ENCODE measurements at regions of chr1 and their contacts with region 1.

Region 1: DNA sequence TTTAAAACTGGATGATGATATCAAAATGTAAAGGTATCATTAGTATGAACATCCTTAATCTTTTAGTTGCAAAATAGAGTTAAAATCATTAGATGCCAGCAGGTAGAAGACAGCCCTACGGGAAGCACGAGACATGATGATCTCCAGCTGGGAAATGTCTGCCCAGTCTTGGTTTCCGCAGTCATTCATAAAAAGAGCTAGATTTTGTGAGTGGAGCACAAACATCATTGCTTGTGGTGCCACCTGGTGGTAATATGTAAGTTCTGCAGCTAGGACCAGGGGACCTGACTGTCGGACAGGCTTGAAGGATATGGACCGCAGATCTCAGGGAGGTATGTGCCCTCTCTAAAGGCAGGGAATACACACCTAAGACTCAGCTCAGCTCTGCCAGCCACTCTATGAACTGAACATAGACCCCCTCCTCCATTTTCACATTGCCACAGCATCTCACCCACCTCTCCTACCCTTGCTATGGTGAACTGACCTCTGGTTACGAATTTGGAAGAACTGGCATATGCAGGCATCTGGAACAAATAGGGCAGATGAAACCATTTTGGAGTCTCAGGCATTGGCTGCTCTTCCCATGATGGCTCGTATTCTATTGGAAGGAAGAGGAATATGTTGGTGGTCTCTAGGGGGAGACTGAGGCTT is 9.2 kb downstream of the FCMR start:
- DNase-seq: peak; percentile 82
- H3K4me3 Mint-ChIP-seq: no peak overlapping the region
- H3K27ac Mint-ChIP-seq: no peak overlapping the region
- H3K4me1 Mint-ChIP-seq: peaks cover 25% of the 10 kb centered on the region
- H3K27me3 Mint-ChIP-seq: peaks cover 20% of the 10 kb centered on the region
- CTCF ChIP-seq: peak; percentile 84

Region 2: GRCh38 chr1:206635080-206635977 is 277.2 kb before region 1 on chr1 and contains the start of gene DYRK3:
- CTCF ChIA-PET with region 1: interaction called, 11 read pairs
- intact Hi-C with region 1: loop called (anchors 1 kb)
- DNase-seq: peak; percentile 98
- H3K4me3 Mint-ChIP-seq: peak within 1 kb of the TSS; percentile 95
- H3K27ac Mint-ChIP-seq: peak within 1 kb of the TSS; percentile 75
- H3K4me1 Mint-ChIP-seq: peaks cover 26% of the 10 kb centered on the region
- H3K27me3 Mint-ChIP-seq: peaks cover 26% of the 10 kb centered on the region
- CTCF ChIP-seq: no peak
- total RNA-seq, gene DYRK3: 7.6 and 8.0 TPM in 2 replicates

Region 3: DNA sequence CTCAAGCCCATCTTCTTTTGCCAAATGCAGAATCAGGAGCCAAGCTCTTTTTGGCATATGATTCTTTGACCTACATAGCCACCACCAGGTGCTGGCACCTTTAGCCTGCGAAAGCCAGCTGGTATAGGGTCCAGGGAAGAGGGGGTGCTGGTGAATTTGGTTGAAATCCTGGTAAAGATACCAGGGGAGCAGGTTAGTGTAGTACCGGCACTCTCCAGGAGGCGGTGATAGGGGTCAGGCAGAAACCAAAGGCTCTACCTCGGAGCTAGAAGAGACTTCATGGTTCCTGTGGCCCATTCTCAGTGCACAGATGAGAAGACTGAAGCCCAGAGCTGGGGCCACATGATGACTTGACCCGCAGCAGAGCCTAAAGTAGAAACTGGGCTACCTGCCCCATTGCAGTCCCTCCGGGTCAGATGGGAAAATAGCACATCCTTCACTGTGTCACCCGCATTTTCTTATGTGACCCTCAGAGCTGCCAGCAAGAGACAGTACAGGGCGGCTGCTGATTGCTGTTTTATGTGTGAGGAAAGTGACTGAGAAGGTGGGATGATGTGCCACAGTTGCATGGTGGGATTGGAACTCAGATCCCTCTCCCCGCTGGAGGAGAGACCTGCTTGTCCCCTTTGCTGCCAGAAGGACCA is 177.9 kb before region 1 on chr1:
- CTCF ChIA-PET with region 1: interaction called, 20 read pairs
- intact Hi-C with region 1: no loop called
- DNase-seq: peak; percentile 77
- H3K4me3 Mint-ChIP-seq: no peak overlapping the region
- H3K27ac Mint-ChIP-seq: no peak overlapping the region
- H3K4me1 Mint-ChIP-seq: peaks cover 13% of the 10 kb centered on the region
- H3K27me3 Mint-ChIP-seq: no peaks in the 10 kb centered on the region
- CTCF ChIP-seq: peak; percentile 89

Region 4: GRCh38 chr1:206865013-206865671 is 47.4 kb before region 1 on chr1 and contains the start of gene IL20:
- CTCF ChIA-PET with region 1: interaction called, 4 read pairs
- intact Hi-C with region 1: loop called (anchors 2 kb)
- DNase-seq: peak; percentile 88
- H3K4me3 Mint-ChIP-seq: no peak within 1 kb of the TSS
- H3K27ac Mint-ChIP-seq: no peak within 1 kb of the TSS
- H3K4me1 Mint-ChIP-seq: no peaks in the 10 kb centered on the region
- H3K27me3 Mint-ChIP-seq: peaks cover 85% of the 10 kb centered on the region
- CTCF ChIP-seq: peak; percentile 86
- total RNA-seq, gene IL20: not detected in 2 replicates

Region 5: DNA sequence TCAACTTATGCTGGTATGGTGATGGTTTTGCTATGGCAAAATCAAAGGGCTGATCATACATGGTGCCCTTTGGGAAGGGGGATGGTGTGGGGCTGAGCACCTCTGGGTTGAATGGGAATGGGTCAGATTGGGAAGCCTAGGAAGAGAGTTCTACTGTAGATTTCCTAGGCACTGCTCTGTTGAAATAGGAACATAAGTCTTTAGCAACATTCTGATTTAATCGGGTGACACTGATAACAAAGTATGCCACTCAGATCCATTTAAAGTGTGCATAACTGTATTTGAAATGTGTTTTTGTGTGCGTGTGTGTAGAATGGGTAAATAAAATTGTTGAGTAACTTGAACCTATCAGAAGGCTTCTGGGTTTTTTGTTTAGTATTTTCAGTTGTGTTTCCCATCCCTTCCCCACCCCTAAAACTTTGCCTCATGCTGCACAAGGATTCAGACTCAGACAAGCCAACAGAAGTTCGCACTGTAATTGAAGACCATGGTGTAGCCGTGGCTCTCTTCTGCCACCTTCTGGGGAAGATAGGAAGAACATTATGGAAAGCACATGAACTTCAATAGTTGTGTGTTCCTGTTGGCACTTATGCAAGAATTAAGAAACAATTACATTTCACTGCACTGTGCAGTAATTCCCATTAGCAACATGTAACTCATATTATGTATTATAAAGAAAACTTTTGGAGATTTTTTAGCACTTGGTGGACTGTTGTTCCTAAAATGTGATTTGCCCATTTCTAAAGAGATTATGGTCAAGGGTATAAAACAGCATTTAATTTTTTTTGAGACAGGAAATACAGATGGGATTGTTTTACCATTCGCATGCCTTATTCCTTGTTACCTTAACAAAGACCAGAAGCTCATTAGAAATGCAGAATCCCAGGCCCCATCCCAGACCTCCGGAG is 165.2 kb after region 1 on chr1:
- CTCF ChIA-PET with region 1: no interaction called
- intact Hi-C with region 1: loop called (anchors 1 kb)
- DNase-seq: peak; percentile 83
- H3K4me3 Mint-ChIP-seq: no peak overlapping the region
- H3K27ac Mint-ChIP-seq: no peak overlapping the region
- H3K4me1 Mint-ChIP-seq: peaks cover 9% of the 10 kb centered on the region
- H3K27me3 Mint-ChIP-seq: no peaks in the 10 kb centered on the region
- CTCF ChIP-seq: peak; percentile 73

Region 6: DNA sequence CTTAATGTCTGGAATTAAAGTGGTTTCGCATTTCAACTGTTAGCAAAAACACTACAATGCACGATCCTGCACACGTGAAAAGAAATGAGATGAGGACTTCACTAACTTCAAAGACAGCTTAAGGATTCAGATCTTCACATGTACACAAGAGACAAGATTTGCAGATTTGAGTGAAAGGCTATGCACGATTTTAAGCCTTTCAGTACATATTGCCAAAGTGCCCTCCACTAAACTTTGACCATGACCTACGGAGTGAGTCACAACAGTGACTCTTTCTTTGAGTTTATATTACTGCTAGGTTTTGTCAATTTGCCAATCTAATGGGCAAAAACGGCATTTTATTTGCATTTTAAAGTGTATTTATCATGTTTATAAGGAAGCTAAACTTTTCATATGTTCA is 691.2 kb after region 1 on chr1:
- CTCF ChIA-PET with region 1: no interaction called
- intact Hi-C with region 1: no loop called
- DNase-seq: no peak
- H3K4me3 Mint-ChIP-seq: no peak overlapping the region
- H3K27ac Mint-ChIP-seq: no peak overlapping the region
- H3K4me1 Mint-ChIP-seq: no peaks in the 10 kb centered on the region
- H3K27me3 Mint-ChIP-seq: no peaks in the 10 kb centered on the region
- CTCF ChIP-seq: no peak

Measured in Calu3 (cell line).